Activated naive CD4-positive, alpha-beta T cell treated with anti-CD3 and anti-CD28 coated beads, Interleukin-2, amount 10 ng/mL, durations not matched to agents 7 days and 5 days (primary cell): ENCODE measurements at regions of chr17 and their contacts with region 1.

Region 1: GRCh38 chr17:68435876-68436842 is 21.1 kb downstream of the WIPI1 start:
- DNase-seq: peak; percentile 91
- H3K4me3 Mint-ChIP-seq: peak overlapping the region; percentile 53
- H3K27ac Mint-ChIP-seq: peak overlapping the region; percentile 90
- H3K4me1 Mint-ChIP-seq: peaks cover 80% of the 10 kb centered on the region
- H3K27me3 Mint-ChIP-seq: no peaks in the 10 kb centered on the region

Region 2: GRCh38 chr17:68205251-68205807 is 230.8 kb before region 1 on chr17:
- CTCF ChIA-PET with region 1: interaction called, 13 read pairs
- DNase-seq: peak; percentile 93
- H3K4me3 Mint-ChIP-seq: peak overlapping the region; percentile 81
- H3K27ac Mint-ChIP-seq: peak overlapping the region; percentile 93
- H3K4me1 Mint-ChIP-seq: peaks cover 39% of the 10 kb centered on the region
- H3K27me3 Mint-ChIP-seq: peaks cover 51% of the 10 kb centered on the region

Region 3: DNA sequence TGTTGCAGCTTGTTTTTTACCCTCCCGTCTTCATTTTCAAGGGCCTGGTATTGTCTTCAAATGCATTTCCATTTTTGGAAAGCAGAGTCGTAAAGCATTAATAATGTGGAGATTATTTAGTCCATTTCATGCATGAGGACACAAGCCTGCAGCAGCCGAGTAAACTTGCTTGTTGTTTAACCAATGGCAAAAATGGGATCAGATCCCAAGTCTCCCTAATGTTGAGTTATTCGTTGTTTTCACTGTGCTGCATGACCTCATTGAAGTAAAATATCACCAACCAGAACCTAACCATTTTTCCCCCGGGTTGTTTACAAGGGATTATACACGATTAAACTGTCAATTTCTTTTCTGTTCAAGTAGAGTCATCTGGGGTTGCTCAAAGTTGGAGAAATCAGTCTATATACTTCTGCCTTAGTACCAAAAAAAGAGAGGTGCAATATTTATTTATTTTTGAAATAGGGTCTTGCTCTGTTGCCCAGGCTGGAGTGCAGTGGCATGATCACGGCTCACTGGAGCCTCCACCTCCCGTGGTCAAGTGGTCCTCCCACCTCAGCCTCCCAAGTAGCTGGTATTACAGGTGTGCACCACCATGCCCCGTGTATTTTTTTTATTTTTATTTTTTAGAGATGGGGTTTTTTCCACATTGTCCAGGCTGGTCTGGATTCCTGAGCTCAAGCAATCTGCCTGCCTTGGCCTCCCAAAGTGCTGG is 176.0 kb before region 1 on chr17:
- CTCF ChIA-PET with region 1: interaction called, 122 read pairs
- DNase-seq: no peak
- H3K4me3 Mint-ChIP-seq: no peak overlapping the region
- H3K27ac Mint-ChIP-seq: peak overlapping the region; percentile 71
- H3K4me1 Mint-ChIP-seq: peaks cover 75% of the 10 kb centered on the region
- H3K27me3 Mint-ChIP-seq: no peaks in the 10 kb centered on the region

Region 4: DNA sequence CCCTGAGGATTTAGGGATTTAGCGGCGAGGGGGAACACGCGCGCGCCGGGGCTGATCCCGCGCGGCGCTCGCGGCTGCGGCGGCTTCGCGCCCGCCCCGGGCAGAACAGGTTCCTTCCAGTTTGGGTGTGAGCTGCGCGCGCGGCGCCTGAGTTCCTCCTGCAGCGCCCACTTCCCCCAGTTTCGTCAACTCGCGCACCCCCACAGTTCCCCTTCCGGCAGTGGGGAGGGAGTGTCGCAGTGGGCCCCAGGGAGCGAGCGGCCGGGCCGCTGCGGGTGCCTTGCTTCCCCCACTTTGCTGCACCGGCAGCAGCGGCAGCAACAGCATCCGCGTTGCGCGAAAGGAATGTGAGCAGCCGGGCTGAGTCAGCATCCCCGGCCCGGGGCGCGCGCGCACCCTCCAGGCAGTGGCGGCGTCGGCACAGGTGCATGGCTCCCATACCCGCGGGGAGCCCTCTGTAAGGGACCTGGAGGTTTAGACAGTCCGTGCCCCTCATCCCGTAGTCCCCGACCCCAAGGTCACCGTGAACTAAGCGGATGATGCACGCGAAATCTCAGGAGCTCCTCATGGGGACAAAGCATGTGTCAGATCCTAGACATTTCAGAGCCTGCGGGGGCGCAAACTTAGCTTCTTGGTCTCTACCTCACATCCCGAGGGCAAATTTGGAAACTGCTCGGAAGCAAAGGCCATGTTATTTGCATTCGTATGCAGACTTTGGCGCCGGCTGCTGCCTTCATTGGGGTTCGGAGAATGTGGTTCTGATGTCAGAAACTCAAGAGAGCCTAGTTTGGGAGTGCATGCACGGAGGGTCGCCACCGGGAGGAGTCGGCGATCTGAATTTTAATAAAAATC is 144.1 kb before region 1 on chr17:
- CTCF ChIA-PET with region 1: interaction called, 11 read pairs
- DNase-seq: peak; percentile 96
- H3K4me3 Mint-ChIP-seq: peak overlapping the region; percentile 67
- H3K27ac Mint-ChIP-seq: peak overlapping the region; percentile 96
- H3K4me1 Mint-ChIP-seq: peaks cover 70% of the 10 kb centered on the region
- H3K27me3 Mint-ChIP-seq: peaks cover 24% of the 10 kb centered on the region

Region 5: GRCh38 chr17:68368387-68368786 is 67.8 kb before region 1 on chr17:
- CTCF ChIA-PET with region 1: no interaction called
- DNase-seq: no peak
- H3K4me3 Mint-ChIP-seq: no peak overlapping the region
- H3K27ac Mint-ChIP-seq: no peak overlapping the region
- H3K4me1 Mint-ChIP-seq: no peaks in the 10 kb centered on the region
- H3K27me3 Mint-ChIP-seq: no peaks in the 10 kb centered on the region

Region 6: DNA sequence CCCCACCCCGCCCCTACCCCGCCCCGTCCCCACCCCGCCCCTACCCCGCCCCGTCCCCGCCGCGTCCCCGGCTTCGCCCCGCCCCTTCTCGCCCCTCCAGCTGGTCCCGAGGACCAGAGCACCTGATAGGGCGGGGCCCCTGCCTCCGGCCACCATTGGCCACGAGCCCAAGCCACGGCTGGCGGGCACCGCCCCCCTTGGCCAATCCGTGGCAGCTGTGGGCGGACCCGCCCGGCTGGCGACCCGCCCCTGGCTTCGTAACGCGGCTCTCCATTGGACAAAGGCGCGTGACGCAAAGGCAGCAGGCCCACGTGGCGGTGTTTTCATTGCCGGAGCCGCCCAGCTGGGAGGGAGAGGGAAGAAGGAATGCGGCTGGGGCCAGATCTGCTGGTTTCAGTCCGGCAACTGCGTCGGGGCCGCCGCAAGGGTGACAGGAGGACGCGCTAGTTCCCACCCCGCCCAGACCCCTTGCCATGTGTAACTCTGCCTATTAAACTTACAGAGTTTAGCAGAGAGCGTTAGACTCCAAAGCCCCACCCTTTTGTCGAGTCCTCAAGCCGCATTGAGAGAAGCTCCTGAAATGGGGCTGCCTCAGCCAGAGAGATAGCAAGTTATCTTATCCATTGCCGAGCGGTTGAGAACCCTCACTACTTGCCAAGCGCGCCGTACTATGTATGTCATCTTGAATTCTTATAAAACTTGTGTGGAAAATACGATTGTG is 21.5 kb after region 1 on chr17:
- CTCF ChIA-PET with region 1: interaction called, 192 read pairs
- DNase-seq: peak; percentile 98
- H3K4me3 Mint-ChIP-seq: peak overlapping the region; percentile 77
- H3K27ac Mint-ChIP-seq: peak overlapping the region; percentile 86
- H3K4me1 Mint-ChIP-seq: peaks cover 81% of the 10 kb centered on the region
- H3K27me3 Mint-ChIP-seq: peaks cover 4% of the 10 kb centered on the region

Region 7: DNA sequence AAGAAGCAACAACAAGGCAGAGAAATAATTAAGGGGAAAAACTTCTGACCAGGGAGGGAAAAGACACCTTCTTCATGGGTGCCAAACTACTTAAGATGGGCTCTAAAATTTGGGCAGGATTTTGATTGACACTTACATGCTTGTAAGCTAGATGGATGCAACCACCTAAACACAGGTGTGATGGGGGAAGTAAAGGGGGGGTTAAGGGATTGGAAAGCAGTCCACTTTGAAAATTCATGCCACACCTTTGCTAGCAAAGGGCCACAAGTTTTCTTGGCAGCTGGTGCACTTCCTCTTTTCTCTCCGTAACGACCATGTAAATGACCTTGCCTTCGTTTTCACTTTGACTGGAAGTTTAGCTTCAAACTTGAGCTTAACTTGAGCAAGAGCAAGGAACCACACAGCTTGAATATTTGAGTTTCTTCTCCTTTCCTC is 61.7 kb after region 1 on chr17:
- CTCF ChIA-PET with region 1: no interaction called
- DNase-seq: no peak
- H3K4me3 Mint-ChIP-seq: no peak overlapping the region
- H3K27ac Mint-ChIP-seq: peak overlapping the region; percentile 73
- H3K4me1 Mint-ChIP-seq: peaks cover 27% of the 10 kb centered on the region
- H3K27me3 Mint-ChIP-seq: peaks cover 9% of the 10 kb centered on the region